Left ventricle myocardium superior (tissue), 1 donor: ENCODE measurements at regions of chr18 and their contacts with region 1.

Region 1: GRCh38 chr18:25351777-25352628 is at the start of gene ZNF521:
- DNase-seq: peak; percentile 91
- ATAC-seq: peak; percentile 84
- total RNA-seq, gene ZNF521: 28.8 TPM

Region 2: DNA sequence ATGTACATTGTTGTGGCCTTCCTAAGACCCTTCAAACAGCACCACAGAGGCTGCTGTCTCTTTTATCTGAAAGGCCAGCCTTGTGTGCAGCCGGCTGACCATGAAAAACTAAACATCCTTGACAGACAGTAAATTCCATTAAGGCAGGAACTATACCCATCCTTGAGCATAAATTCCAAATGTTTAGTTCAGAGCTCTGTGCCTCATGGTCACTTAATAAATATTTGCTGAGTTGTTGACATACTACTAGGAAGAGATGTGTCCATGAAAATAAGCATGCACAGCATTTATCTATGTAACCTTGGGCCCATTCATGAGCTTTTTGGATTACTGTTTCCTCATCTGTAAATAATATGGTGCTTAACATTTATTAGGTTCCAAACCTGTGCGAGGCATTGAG is 466.7 kb before region 1 on chr18:
- intact Hi-C with region 1: loop called (anchors 10 kb)
- DNase-seq: no peak
- ATAC-seq: no peak

Region 3: DNA sequence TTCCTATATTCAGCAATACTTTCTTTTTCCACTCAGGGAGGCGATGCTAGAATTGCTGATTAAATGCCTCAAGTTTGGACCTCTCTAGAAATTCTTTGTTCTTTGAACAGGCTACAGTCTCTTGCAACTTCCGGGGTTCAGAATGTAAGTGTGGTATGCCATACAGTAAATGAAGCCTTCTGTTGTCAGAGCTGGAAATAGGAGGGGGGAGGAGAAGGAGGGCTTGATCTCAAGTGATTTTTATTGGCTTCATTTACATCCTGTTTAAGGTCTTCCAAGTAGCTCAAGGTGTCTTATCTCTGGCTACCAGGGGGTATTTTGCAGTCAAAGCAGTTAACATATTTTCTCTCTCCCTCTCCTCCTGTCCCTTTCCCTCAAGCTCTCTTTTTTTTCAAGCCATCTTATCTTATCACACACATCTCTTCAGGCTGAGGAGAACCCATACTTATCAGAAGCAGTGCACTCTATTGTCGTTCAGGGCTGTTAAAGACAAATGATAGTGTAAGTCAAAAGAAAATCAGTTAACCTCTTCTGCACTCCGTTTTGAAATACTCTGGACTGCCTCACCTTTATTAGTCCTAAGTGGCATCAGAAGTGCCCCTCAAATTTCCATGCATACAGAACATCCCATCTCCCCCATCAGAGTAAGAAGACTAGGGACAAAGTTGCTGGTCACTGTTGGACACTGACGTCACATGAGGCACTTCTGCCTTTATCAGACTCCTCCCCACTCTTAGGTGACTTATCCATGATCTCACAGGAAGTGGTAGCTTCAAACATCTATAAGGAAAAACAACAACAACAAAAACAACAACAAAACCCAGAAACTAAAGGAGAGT is 112.2 kb before region 1 on chr18:
- intact Hi-C with region 1: loop called (anchors 5 kb)
- DNase-seq: no peak
- ATAC-seq: no peak

Region 4: DNA sequence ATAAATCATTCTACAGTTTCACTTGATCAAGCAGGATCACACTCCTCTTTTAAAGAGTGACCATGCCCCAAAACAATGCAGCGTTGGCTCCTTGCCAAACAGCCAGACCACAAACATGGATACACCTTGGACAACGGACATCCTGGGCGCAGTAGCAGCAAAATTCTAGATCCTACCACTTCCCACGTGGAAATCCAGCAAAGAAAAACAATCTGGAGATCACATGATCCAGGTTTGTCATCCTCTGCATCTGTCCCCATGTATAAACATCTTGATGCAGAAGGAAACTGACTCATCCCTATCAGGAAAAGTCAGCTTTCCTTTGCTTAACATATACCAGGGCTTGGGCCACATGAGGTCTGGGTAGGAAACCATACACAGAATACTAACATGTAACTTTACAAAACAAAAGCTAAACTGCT is 53.1 kb before region 1 on chr18:
- intact Hi-C with region 1: loop called (anchors 10 kb)
- DNase-seq: no peak
- ATAC-seq: peak; percentile 68